GM12878 (cell line): ENCODE measurements at regions of chr19 and their contacts with region 1.

Region 1: DNA sequence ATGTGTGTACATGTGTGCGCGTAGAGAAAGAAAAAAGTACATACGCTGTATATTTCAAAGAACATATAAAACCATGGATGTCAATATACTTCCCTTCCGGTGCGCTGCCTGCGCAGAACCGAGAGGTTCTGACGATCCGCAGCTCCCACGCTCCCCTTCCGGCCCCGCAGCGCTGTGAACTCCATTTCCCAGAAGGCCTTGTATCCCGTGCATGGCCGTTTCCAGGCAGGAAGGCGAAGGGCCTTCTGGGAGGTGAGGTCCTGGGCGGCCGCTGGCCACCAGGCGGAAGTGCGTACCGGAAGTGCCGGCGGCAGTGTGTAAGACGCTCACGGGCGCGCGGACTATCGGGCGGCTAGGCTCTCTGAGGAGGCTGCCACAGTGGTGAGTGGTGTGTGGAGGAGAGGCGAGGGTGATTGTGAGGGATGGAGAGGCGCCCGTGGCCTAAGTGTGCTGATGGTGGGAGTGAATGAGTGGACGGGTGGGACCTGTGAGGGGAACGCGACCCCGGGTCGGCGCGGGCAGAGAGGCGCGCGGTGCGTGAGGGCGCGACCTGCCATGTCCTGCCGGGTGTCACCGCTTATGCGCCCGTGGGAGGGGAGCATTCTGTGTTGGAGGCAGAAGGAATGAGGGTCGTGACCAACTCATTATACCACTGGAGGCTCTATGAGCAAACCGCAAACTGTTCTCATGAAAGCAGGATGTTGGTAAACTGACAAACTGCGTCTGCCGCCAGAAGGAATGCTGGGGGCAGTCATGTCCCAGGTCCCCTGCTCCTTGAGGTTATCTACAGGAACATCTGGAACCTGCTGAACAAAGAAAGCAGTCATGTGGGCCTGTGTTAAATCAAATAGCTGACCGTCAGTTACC is at the start of gene ERVK3-1:
- DNase-seq: peak; percentile 91
- ATAC-seq: peak; percentile 98
- H3K4me3 ChIP-seq: peak within 1 kb of the TSS; percentile 97
- H3K27ac ChIP-seq: peak within 1 kb of the TSS; percentile 92
- H3K4me1 ChIP-seq: 0 out of 2 replicates have a peak, but pooled peaks cover 3% of the 10 kb centered on the region
- H3K27me3 ChIP-seq: no peaks in the 10 kb centered on the region
- CTCF ChIP-seq: no peak
- EP300 ChIP-seq: no peak
- POLR2A ChIP-seq: peak; percentile 100
- RAD21 ChIP-seq: no peak
- polyA plus RNA-seq, gene ERVK3-1: 150 to 172 TPM

Region 2: GRCh38 chr19:58067240-58067912 is 237.9 kb before region 1 on chr19:
- CTCF ChIA-PET with region 1: no interaction called
- POLR2A ChIA-PET with region 1: no interaction called
- RAD21 ChIA-PET with region 1: no interaction called
- SMC1A ChIA-PET with region 1: no interaction called
- in situ Hi-C with region 1: no loop called
- intact Hi-C with region 1: no loop called
- DNase-seq: no peak
- ATAC-seq: no peak
- H3K4me3 ChIP-seq: no peak overlapping the region
- H3K27ac ChIP-seq: no peak overlapping the region
- H3K4me1 ChIP-seq: no peaks in the 10 kb centered on the region
- H3K27me3 ChIP-seq: no peaks in the 10 kb centered on the region
- CTCF ChIP-seq: no peak
- EP300 ChIP-seq: no peak
- POLR2A ChIP-seq: no peak
- RAD21 ChIP-seq: no peak

Region 3: DNA sequence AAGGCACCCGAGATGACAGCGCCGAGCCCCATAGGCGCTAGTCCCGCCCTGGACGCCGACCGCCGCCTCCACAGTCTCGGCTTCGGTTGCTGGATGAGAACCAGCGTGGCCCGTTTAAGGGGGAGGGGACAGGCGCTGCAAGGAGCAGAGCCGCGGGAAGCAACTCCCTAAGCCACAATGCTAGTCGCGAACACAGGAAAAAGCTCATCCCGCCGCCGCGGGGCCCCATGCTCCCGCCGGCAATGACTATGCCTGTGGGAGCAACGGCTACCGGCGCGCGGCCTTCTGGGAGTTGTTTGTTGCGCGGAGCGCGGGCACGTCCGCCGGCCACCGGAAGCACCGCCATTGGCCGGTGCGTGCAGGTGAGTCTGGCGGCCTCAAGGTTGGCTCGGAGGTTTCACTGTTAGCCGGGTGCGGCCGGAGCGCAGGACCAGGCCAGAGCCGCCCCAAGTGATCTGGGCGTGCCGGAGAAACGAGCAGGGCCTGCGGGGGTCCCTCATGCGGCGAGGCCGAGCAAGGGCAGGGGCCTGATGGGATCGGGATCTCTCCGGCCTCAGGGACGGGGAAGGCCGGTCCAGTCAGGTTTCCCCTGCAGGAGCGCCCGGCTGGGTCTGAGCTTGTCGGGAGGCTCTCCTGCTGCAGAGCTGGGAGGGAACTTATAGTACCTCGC is 76.6 kb before region 1 on chr19 and contains the start of gene ZNF544:
- CTCF ChIA-PET with region 1: interaction called, 3 read pairs
- POLR2A ChIA-PET with region 1: interaction called, 3 read pairs
- RAD21 ChIA-PET with region 1: no interaction called
- SMC1A ChIA-PET with region 1: no interaction called
- in situ Hi-C with region 1: no loop called
- intact Hi-C with region 1: loop called (anchors 10 kb)
- DNase-seq: peak; percentile 9
- ATAC-seq: peak; percentile 98
- H3K4me3 ChIP-seq: peak within 1 kb of the TSS; percentile 85
- H3K27ac ChIP-seq: peak within 1 kb of the TSS; percentile 88
- H3K4me1 ChIP-seq: peaks cover 9% of the 10 kb centered on the region
- H3K27me3 ChIP-seq: no peaks in the 10 kb centered on the region
- CTCF ChIP-seq: peak in 1 of 3 experiments; percentile 21; a peak in 1 of 6 replicates
- EP300 ChIP-seq: no peak
- POLR2A ChIP-seq: peak; percentile 92
- RAD21 ChIP-seq: no peak
- polyA plus RNA-seq, gene ZNF544: 27.3 to 34.9 TPM

Region 4: GRCh38 chr19:58261968-58262921 is 43.1 kb before region 1 on chr19:
- CTCF ChIA-PET with region 1: no interaction called
- POLR2A ChIA-PET with region 1: no interaction called
- RAD21 ChIA-PET with region 1: no interaction called
- SMC1A ChIA-PET with region 1: no interaction called
- in situ Hi-C with region 1: no loop called
- intact Hi-C with region 1: no loop called
- DNase-seq: no peak
- ATAC-seq: no peak
- H3K4me3 ChIP-seq: no peak overlapping the region
- H3K27ac ChIP-seq: no peak overlapping the region
- H3K4me1 ChIP-seq: no peaks in the 10 kb centered on the region
- H3K27me3 ChIP-seq: no peaks in the 10 kb centered on the region
- CTCF ChIP-seq: no peak
- EP300 ChIP-seq: no peak
- POLR2A ChIP-seq: 0 out of 2 replicates have a peak, but pooled peaks have one; percentile 22
- RAD21 ChIP-seq: no peak